Activated CD4-positive, alpha-beta memory T cell treated with anti-CD3 and anti-CD28 coated beads for 36 hours (primary cell): ENCODE measurements at regions of chr1 and their contacts with region 1.

Region 1: DNA sequence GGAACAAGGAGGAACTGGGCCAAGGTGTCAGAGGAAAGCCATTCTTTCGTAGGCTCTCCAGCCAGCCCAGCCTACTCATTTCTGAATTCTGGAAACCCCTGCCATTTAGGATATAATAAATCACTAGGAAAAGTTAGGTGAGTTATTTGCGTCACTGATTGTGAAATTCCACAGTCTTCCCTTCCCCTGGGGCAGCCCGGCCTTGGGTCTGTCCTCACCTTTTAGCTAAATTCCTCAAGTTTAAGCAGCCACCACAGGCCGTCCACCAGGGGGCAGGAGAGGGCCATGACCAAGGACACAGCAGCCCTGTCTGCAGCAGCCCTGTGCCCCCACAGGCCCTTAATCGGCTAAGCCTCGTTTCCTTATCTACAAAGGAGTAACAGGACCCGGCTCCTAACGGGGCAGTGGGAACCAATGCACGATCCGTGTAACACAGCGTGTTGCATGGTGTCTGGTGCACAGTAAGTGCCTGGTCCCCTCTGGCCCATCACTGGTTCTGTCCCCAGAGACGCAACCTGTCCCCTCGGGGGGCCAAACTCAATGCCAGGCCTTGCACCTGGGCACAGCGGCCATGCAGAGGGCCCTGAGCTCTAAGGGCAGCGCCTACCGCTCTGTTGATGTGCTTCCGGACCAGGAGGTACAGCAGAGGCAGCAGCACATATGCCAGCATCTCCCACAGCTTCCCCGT is 18.1 kb downstream of the GPR157 start:
- DNase-seq: peak; percentile 90
- H3K4me3 Mint-ChIP-seq: no peak overlapping the region
- H3K27ac Mint-ChIP-seq: no peak overlapping the region
- H3K4me1 Mint-ChIP-seq: peaks cover 12% of the 10 kb centered on the region
- H3K27me3 Mint-ChIP-seq: no peaks in the 10 kb centered on the region

Region 2: DNA sequence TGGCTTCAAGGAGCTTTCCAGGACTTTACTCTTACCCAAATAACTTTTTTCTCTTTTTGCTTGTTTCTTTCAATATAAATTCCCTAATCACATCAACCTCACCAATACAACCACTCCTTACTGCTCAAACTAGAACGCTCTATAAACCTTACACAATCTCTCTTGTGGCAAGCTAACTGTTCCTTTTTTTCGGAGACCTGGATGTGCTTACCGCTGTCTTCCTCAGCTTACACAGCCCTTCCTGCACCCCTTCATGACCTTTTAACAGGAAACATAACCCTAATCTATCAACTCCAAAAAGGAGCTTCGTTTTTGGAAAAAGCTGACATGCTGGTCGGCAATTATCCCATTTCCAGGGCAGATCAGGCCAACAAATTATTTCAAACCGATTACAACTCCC is 17.2 kb before region 1 on chr1:
- CTCF ChIA-PET with region 1: interaction called, 12 read pairs
- POLR2A ChIA-PET with region 1: no interaction called
- intact Hi-C with region 1: no loop called
- DNase-seq: no peak
- H3K4me3 Mint-ChIP-seq: no peak overlapping the region
- H3K27ac Mint-ChIP-seq: no peak overlapping the region
- H3K4me1 Mint-ChIP-seq: no peaks in the 10 kb centered on the region
- H3K27me3 Mint-ChIP-seq: peaks cover 4% of the 10 kb centered on the region

Region 3: GRCh38 chr1:9135073-9135836 is 24.4 kb after region 1 on chr1:
- CTCF ChIA-PET with region 1: interaction called, 12 read pairs
- POLR2A ChIA-PET with region 1: no interaction called
- intact Hi-C with region 1: no loop called
- DNase-seq: no peak
- H3K4me3 Mint-ChIP-seq: no peak overlapping the region
- H3K27ac Mint-ChIP-seq: no peak overlapping the region
- H3K4me1 Mint-ChIP-seq: peaks cover 13% of the 10 kb centered on the region
- H3K27me3 Mint-ChIP-seq: peaks cover 3% of the 10 kb centered on the region

Region 4: DNA sequence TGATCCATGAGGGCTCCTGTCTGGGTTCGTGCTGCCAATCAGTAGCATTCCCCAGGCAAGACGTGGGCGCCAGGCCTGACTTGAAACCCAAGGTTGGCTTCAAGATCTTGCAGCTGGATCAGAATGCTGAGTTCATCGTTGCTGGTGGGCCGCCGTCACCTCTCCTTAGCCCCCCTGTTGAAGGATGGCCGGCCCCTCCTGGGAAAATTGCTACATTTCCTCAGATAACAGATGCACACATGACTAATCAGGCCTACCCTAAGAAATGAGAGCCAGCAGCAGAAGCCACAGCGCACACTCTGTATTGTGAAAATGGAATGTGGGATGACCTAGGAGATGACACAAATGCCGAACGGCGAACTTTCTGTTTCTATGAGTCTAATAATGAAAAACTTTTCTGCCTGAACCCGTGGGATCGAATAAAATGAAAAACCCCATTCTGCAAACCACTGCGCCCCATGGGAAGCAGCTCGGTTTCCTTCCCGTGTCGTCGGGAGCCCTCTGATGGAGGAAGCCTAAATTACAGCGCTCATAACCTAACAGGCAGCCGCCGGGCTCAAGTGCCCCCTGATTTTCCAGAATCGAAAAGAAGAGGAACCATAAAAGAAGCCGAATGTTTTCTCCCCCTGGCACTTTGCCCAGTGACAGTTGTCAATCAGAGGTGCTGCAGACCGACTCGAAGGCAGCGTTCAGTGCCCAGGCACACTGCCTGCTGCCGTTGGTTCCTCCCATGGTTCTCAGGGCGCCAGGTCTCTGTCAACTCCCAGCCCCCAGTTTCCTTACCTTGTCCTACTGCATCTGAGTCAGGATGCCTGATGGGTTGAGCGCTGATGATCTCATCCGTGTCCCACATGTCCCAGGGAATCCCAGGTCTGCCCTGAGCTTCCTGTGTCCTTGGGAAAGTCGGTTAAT is 85.6 kb after region 1 on chr1:
- CTCF ChIA-PET with region 1: interaction called, 40 read pairs
- POLR2A ChIA-PET with region 1: interaction called, 4 read pairs
- intact Hi-C with region 1: loop called (anchors 1 kb)
- DNase-seq: peak; percentile 80
- H3K4me3 Mint-ChIP-seq: no peak overlapping the region
- H3K27ac Mint-ChIP-seq: no peak overlapping the region
- H3K4me1 Mint-ChIP-seq: peaks cover 16% of the 10 kb centered on the region
- H3K27me3 Mint-ChIP-seq: peaks cover 50% of the 10 kb centered on the region

Region 5: GRCh38 chr1:9249534-9250410 is 139.0 kb after region 1 on chr1:
- CTCF ChIA-PET with region 1: interaction called, 51 read pairs
- POLR2A ChIA-PET with region 1: no interaction called
- intact Hi-C with region 1: no loop called
- DNase-seq: peak; percentile 59
- H3K4me3 Mint-ChIP-seq: no peak overlapping the region
- H3K27ac Mint-ChIP-seq: no peak overlapping the region
- H3K4me1 Mint-ChIP-seq: peaks cover 2% of the 10 kb centered on the region
- H3K27me3 Mint-ChIP-seq: no peaks in the 10 kb centered on the region

Region 6: DNA sequence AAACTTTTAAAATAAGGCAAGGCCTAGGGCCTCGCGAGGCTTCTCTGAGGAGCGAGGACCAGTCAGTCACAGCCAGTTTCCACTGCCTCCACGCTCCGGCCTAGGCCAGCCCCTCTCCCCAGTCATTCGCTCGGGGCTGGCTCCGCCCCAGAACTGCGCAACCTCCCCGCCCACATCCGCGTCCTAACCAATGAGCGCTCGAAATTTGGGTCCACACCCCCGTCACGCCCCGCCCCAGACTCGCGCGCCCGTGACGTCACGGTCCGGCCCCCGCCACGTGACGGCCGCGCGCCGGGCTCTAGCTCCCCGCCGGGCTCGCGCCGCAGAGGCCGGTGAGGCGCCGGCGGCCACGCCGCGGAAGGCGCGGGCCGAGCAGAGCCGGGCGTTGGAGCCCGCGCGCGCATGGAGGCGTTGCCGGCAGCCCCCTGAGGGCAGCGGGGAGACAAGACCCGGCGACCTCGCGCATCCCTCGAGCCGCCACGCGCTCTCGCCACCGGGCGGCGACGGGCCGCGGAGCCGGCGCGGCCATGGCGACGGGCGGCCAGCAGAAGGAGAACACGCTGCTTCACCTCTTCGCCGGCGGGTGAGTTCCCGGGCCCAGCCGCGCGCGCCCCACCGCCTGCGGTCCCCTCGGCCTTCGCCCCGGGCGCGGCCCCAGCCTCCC is 428.5 kb after region 1 on chr1 and contains the start of gene SLC25A33:
- CTCF ChIA-PET with region 1: no interaction called
- POLR2A ChIA-PET with region 1: no interaction called
- intact Hi-C with region 1: no loop called
- DNase-seq: peak; percentile 99
- H3K4me3 Mint-ChIP-seq: peak within 1 kb of the TSS; percentile 91
- H3K27ac Mint-ChIP-seq: peak within 1 kb of the TSS; percentile 77
- H3K4me1 Mint-ChIP-seq: peaks cover 33% of the 10 kb centered on the region
- H3K27me3 Mint-ChIP-seq: no peaks in the 10 kb centered on the region
- total RNA-seq, gene SLC25A33: 5.4 to 6.1 TPM